Activated CD4-positive, alpha-beta T cell treated with anti-CD3 and anti-CD28 coated beads for 36 hours (primary cell): ENCODE measurements at regions of chr6 and their contacts with region 1.

Region 1: GRCh38 chr6:135640449-135641111 is 143.0 kb upstream of the AHI1 start:
- DNase-seq: peak; percentile 19
- ATAC-seq: peak; percentile 91
- H3K4me3 Mint-ChIP-seq: no peak overlapping the region
- H3K27ac Mint-ChIP-seq: peak overlapping the region; percentile 69
- H3K4me1 Mint-ChIP-seq: peaks cover 41% of the 10 kb centered on the region
- H3K27me3 Mint-ChIP-seq: peaks cover 4% of the 10 kb centered on the region

Region 2: GRCh38 chr6:135577059-135577538 is 63.5 kb before region 1 on chr6:
- CTCF ChIA-PET with region 1: no interaction called
- POLR2A ChIA-PET with region 1: no interaction called
- intact Hi-C with region 1: loop called in 1 of 2 experiments (anchors 5 kb)
- DNase-seq: no peak
- ATAC-seq: peak; percentile 94
- H3K4me3 Mint-ChIP-seq: peak overlapping the region; percentile 8
- H3K27ac Mint-ChIP-seq: peak overlapping the region; percentile 70
- H3K4me1 Mint-ChIP-seq: peaks cover 23% of the 10 kb centered on the region
- H3K27me3 Mint-ChIP-seq: no peaks in the 10 kb centered on the region

Region 3: GRCh38 chr6:135592276-135592675 is 48.3 kb before region 1 on chr6:
- CTCF ChIA-PET with region 1: no interaction called
- POLR2A ChIA-PET with region 1: no interaction called
- intact Hi-C with region 1: loop called in 1 of 2 experiments (anchors 5 kb)
- DNase-seq: no peak
- ATAC-seq: no peak
- H3K4me3 Mint-ChIP-seq: no peak overlapping the region
- H3K27ac Mint-ChIP-seq: no peak overlapping the region
- H3K4me1 Mint-ChIP-seq: peaks cover 4% of the 10 kb centered on the region
- H3K27me3 Mint-ChIP-seq: no peaks in the 10 kb centered on the region

Region 4: GRCh38 chr6:135606392-135606791 is 34.2 kb before region 1 on chr6:
- CTCF ChIA-PET with region 1: no interaction called
- POLR2A ChIA-PET with region 1: no interaction called
- intact Hi-C with region 1: loop called in 1 of 2 experiments (anchors 5 kb)
- DNase-seq: no peak
- ATAC-seq: no peak
- H3K4me3 Mint-ChIP-seq: no peak overlapping the region
- H3K27ac Mint-ChIP-seq: peak overlapping the region; percentile 20
- H3K4me1 Mint-ChIP-seq: peaks cover 30% of the 10 kb centered on the region
- H3K27me3 Mint-ChIP-seq: no peaks in the 10 kb centered on the region

Region 5: GRCh38 chr6:135624402-135625295 is 15.9 kb before region 1 on chr6:
- CTCF ChIA-PET with region 1: interaction called, 7 read pairs
- POLR2A ChIA-PET with region 1: no interaction called
- intact Hi-C with region 1: loop called (anchors 1 to 2 kb)
- DNase-seq: peak; percentile 19
- ATAC-seq: peak; percentile 84
- H3K4me3 Mint-ChIP-seq: no peak overlapping the region
- H3K27ac Mint-ChIP-seq: peak overlapping the region; percentile 90
- H3K4me1 Mint-ChIP-seq: peaks cover 31% of the 10 kb centered on the region
- H3K27me3 Mint-ChIP-seq: no peaks in the 10 kb centered on the region